HAP-1 (cell line): ENCODE measurements at regions of chrX and their contacts with region 1.

Region 1: DNA sequence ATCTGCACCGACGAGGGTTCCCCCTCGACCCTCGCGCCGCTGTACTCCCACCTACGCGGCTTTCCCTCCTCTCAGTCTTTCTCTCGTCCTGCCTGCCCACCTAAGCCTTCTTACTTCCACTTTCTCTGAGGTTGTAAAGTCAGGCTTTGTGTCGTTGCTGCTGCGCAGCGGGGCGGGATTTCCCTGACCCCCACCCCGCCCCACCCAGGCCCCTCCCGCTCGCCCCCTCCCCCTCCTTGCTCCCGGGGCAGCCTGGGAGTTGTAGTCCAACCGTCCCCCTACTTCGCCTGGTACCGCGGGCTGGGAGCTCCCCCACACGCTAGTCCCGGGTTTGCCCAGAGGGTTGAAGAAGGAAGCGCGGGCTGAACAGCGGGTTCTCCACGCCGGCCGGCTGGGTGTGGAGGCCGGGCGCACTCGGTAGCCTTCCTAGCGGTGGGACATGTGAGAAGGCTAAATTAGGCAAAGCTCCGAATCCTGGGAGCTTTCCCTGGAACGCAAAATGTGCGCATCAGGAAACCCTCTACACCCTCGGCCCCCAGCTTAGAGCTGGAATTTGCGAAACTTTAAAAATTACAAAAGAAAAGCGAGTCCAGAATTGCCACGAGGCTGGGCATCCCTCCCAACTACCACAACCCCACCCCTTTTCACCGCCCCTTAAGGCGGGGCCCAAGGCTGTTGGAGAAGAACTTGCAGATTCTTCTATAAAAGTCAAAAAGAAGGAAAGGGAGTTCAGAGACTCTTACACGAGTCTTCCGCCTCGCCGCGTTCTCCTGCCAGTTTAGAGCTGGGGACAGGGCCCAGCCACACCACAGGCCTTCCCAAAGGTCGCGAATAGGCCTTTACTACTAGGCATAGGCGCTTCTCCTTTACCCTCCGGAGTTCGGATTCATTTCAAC is at the start of gene ATP11C:
- DNase-seq: peak; percentile 90 to 94
- H3K4me3 ChIP-seq: peak within 1 kb of the TSS; percentile 85
- H3K4me1 ChIP-seq: peaks cover 37% of the 10 kb centered on the region
- H3K27me3 ChIP-seq: no peaks in the 10 kb centered on the region

Region 2: DNA sequence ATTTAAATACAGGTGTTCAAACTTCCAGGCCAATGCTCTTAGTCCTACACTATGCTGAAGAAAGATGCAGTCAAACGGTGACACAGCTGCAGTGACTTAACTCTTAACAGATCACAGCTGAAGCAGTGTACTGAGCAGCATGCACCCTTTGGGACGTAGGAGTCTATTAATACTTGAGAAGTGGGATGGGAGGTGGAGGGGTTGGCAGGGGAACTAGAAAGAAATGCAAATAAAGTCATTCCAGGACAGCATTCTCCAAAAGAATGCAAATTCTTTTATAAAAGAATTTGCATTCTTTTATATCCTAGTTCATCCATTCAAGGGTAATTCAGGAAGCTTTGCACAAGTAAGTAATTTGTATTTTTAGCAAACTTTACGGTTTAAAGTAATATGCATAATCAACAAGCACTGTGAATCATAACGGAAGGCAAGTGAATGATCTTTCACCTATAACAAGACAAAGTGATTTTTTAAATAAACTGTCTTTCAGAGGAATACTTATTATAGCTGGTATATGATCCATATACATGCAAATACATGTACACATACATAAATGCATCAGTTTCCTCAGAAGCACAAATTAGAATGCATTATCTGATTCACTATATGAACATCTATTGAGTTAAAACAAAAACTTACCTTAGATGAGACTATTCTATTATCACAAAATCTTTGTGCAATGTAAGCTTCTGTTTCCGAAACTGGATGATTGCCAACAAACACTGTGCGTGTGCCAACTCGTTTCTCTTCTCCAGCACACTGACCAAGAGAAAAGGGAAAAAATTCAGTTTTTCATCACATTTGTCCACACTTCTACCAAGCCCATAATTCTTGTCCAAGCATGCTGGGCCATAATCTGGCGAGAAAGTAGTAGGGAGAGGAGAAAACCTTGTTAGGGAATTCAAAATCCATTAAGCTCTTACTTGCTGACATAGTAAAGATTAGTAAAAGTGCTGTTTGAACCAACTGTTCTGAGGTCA is 106.8 kb before region 1 on chrX:
- in situ Hi-C with region 1: loop called (anchors 5 kb)
- DNase-seq: peak; percentile 78 to 96
- H3K4me3 ChIP-seq: no peak overlapping the region
- H3K4me1 ChIP-seq: peaks cover 67% of the 10 kb centered on the region
- H3K27me3 ChIP-seq: no peaks in the 10 kb centered on the region